ENCODE measurements at regions of chr15 and their contacts with region 1.

Region 1: GRCh38 chr15:35751413-35752133 is 205.6 kb upstream of the DPH6 start:
- DNase-seq: peak; percentile 51
- H3K4me3 ChIP-seq: no peak overlapping the region
- H3K27ac ChIP-seq: no peak overlapping the region
- H3K27me3 ChIP-seq: no peaks in the 10 kb centered on the region
- CTCF ChIP-seq: peak; percentile 78

Region 2: DNA sequence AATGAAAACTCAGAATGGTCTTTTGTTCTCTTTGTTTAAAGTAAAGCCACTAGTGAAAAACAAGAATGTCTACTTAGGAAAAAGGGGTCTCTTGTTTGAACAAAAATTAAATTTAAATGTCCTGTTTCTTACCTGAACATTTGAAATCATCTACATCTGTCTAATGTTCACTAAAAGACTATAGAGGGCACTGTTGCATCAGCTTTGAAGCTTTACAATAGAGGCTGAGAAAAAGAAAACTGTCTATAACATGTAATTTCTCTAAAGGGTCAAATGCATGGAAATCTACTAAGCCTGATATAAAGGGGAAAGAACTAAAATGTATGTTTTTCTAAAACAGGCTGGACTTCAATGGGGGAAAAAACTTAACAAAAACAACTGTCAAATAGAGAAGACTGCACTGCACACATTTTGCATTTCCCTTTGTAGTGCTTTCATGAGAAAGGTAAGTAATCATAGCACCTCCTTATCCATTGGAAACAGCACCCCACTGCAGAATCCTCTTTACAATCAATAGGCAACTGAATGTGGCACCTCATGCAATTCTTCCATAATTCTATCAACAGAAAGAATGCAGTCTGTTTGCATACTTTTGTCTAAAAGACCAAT is 231.9 kb before region 1 on chr15:
- CTCF ChIA-PET with region 1: interaction called, 10 read pairs
- POLR2A ChIA-PET with region 1: no interaction called
- DNase-seq: peak; percentile 18
- H3K4me3 ChIP-seq: no peak overlapping the region
- H3K27ac ChIP-seq: no peak overlapping the region
- H3K27me3 ChIP-seq: no peaks in the 10 kb centered on the region
- CTCF ChIP-seq: peak; percentile 70

Region 3: DNA sequence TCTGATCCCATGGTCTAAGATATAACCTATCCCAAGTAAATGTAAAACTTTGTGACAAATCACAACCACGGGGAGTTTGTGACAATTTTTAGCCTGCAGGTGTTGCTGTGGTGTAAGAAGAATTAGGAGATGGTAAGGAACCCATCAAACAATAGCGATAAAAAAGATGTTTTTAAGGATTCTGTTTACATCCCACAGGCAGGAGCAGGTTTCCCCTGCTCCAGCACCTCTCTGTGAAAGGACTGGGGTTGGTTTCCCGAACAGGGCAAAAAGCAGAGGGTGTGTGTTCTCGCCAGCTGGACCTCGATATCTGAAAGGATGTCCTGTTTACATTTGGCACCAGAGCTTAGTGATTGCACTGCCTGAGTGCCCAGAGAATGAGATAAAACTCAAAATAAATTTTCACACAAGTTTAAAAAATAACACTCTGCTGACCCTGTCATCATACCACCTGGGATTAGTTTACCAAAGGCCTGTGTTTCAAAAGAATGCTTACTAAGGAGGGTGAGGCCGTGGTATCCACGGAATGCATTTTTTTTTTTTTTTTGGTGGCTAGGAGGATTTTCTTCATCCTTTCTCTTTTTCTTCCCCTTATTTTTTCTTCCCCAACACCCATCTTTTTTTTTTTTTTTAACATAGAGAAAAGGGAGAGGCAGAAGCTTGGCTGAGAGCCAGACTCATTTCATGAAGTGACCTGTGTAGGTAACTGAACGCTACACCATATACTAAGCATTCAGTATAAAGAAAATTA is 53.8 kb before region 1 on chr15:
- CTCF ChIA-PET with region 1: interaction called, 11 read pairs
- POLR2A ChIA-PET with region 1: no interaction called
- DNase-seq: peak; percentile 62
- H3K4me3 ChIP-seq: no peak overlapping the region
- H3K27ac ChIP-seq: peak overlapping the region; percentile 87
- H3K27me3 ChIP-seq: no peaks in the 10 kb centered on the region
- CTCF ChIP-seq: no peak

Region 4: DNA sequence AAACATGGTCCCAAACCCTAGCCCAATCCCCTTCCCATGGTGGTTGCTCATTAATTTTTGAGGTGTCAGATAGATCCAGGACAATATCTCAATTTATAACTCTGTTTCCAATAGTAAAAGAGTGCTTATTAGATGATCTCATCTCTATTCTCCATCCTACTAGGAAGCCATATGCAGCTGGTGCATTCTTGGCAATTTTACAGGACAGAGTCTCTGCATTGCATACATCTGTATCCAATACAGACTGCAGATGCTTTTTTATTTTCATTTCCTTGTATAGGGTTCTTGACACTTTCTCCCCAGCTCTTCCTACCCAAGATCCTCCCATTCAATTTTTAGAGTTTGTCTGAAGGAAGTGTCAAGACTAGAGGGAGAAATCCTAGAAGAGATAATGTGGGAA is 10.8 kb before region 1 on chr15:
- CTCF ChIA-PET with region 1: interaction called, 92 read pairs
- POLR2A ChIA-PET with region 1: no interaction called
- DNase-seq: peak; percentile 70
- H3K4me3 ChIP-seq: no peak overlapping the region
- H3K27ac ChIP-seq: no peak overlapping the region
- H3K27me3 ChIP-seq: no peaks in the 10 kb centered on the region
- CTCF ChIP-seq: no peak

Region 5: DNA sequence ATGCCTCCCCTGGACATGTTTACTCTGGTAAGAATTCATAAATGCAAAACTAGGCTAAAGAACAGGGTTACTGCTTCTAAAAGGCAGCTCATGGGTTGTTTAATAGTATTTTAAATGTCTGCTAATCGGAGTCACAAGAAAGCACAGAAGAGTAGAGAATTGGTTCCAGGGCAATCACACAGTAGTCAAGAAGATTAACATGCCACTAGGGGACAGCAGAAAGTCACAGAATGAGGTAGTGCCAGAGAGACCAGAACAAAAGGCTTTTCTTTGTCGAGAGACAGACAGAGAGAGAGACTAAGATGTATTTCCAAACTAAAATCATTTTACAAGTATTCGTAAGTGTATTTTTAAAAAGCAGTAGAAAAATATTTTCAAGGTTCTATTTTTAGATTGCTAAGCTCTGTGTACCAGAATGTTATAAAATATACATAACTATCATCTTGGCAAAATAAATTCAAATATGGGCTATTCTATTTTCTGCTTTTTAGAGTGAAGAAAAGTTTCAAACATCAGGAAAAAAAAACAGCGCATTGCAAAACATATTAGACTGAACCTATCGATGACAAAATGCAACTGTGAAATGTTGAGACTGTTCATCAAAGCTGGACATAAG is 749.6 kb after region 1 on chr15:
- CTCF ChIA-PET with region 1: interaction called, 11 read pairs
- POLR2A ChIA-PET with region 1: no interaction called
- DNase-seq: peak; percentile 33
- H3K4me3 ChIP-seq: no peak overlapping the region
- H3K27ac ChIP-seq: no peak overlapping the region
- H3K27me3 ChIP-seq: no peaks in the 10 kb centered on the region
- CTCF ChIP-seq: peak; percentile 72